Colonic mucosa (tissue), 4 donors: ENCODE measurements at regions of chr2 and their contacts with region 1.

Region 1: GRCh38 chr2:190099890-190100697 is 37.6 kb upstream of the MSTN start:
- DNase-seq: no peak
- H3K4me3 ChIP-seq: no peak overlapping the region
- H3K27ac ChIP-seq: no peak overlapping the region
- H3K4me1 ChIP-seq: no peaks in the 10 kb centered on the region
- H3K27me3 ChIP-seq: no peaks in the 10 kb centered on the region
- CTCF ChIP-seq: no peak

Region 2: DNA sequence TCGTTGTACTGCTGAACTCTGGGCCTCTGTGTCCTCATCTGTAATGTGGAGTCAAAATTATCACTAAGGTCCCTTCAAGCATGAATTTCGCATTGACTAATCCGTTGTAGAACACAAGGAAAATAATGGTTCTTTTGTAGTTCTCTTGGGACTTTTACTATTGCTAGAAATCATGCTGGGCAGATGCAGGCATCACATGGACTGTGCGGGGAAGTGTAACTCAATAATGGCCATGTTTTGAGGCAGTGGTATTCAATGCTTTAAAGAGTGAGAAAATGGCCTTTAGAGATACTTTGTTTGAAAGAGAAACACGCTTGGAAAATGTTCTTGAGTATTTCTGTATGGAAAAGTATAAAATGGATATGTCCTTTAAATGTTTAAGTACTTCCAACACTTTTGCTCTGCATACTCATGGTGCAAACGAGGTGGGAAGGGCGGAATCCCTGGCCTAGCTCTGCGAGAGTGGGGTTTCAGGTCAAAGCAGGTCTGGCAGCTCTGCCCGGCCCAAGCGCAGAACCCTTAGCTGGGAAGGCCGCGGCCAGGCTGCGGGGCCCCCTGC is 79.7 kb after region 1 on chr2:
- intact Hi-C with region 1: loop called (anchors 5 kb)
- DNase-seq: no peak
- H3K4me3 ChIP-seq: peak overlapping the region; percentile 54
- H3K27ac ChIP-seq: peak overlapping the region; percentile 86
- H3K4me1 ChIP-seq: no peaks in the 10 kb centered on the region
- H3K27me3 ChIP-seq: no peaks in the 10 kb centered on the region
- CTCF ChIP-seq: no peak